GM13976 (cell line): ENCODE measurements at regions of chr4 and their contacts with region 1.

Region 1: GRCh38 chr4:70505151-70505748 is 13.1 kb upstream of the AMTN start:
- DNase-seq: peak; percentile 36
- CTCF ChIP-seq: peak; percentile 96

Region 2: DNA sequence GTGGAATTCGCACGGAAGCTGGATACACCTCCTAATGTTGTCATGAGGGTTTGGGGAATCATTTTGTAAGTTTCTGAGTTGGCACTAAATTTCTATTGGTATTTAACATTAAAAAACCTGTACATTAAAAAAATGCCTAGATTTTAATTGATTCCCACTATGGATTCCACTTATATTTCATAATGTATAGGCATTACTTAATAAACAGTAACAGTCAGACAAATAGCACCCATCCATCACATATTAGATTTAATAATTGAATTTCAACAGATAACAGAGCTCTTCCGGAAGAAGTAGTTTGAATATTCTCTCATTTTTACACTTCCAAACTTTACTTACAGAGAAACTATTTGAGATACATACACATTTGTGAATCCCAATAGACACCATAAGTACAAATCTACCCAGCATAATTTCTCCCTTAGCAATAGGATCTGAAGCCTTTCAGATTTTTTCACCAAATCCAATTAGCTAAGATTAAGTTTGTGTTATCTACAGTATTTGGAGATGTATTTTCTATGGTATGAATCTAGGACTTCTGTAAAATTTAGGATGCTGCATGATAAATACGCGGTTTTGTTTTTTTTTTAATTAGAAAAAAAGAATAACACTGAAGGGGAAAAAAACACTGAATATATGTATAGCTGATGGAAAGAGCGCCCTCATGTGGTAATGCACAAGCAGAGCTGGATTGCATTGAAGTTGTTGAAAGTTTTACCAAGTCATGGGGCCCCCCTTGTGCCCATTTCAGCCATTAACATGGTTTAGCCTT is 321.9 kb before region 1 on chr4:
- in situ Hi-C with region 1: loop called (anchors 25 kb)
- DNase-seq: no peak
- CTCF ChIP-seq: peak; percentile 71